Left ventricle myocardium superior (tissue), 1 donor: ENCODE measurements at regions of chr5 and their contacts with region 1.

Region 1: GRCh38 chr5:149988126-149988525 is 12.3 kb downstream of the TIGD6 start:
- DNase-seq: no peak
- ATAC-seq: no peak

Region 2: GRCh38 chr5:149749481-149750365 is 238.4 kb before region 1 on chr5:
- intact Hi-C with region 1: no loop called
- DNase-seq: no peak
- ATAC-seq: no peak

Region 3: DNA sequence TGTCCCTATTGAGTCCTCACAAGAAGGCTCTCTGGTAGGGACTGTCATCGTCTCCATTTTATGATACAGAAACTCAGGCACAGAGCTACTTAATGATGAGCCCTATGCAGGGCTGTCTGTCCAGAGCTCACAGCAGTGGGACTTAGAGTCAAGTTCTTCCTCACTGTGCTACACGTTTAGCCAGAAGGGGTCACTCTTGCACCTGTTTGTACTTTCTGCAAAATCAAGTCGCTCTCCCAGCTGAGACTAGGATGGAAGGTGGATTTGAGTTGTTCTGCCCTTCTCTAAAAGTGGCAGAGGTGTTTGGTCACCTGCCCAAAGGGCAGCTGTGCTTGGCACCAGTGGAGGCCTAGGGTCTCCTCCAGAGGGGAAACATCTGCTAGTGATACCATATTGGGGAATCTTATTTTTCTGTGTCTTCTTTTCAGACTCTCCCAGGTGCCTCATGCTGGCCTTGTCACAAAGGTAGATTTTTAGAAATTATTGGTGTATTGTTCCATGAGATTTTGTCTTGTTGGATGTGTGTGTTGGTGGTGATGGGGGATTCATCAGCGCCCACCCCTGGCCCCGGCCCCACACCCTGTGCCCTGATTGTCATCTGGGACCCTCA is 153.8 kb before region 1 on chr5:
- intact Hi-C with region 1: loop called (anchors 10 kb)
- DNase-seq: no peak
- ATAC-seq: peak; percentile 36